H1 (cell line): ENCODE measurements at regions of chr13 and their contacts with region 1.

Region 1: GRCh38 chr13:113374511-113375175 is 10.7 kb upstream of the GRTP1 start:
- DNase-seq: no peak
- H3K4me3 ChIP-seq: no peak overlapping the region
- H3K27ac ChIP-seq: no peak overlapping the region
- H3K4me1 ChIP-seq: peaks cover 3 to 18% (median 10%) of the 10 kb centered on the region in 4 experiments
- H3K27me3 ChIP-seq: no peaks in the 10 kb centered on the region
- CTCF ChIP-seq: no peak
- EP300 ChIP-seq: no peak
- POLR2A ChIP-seq: no peak
- RAD21 ChIP-seq: no peak

Region 2: DNA sequence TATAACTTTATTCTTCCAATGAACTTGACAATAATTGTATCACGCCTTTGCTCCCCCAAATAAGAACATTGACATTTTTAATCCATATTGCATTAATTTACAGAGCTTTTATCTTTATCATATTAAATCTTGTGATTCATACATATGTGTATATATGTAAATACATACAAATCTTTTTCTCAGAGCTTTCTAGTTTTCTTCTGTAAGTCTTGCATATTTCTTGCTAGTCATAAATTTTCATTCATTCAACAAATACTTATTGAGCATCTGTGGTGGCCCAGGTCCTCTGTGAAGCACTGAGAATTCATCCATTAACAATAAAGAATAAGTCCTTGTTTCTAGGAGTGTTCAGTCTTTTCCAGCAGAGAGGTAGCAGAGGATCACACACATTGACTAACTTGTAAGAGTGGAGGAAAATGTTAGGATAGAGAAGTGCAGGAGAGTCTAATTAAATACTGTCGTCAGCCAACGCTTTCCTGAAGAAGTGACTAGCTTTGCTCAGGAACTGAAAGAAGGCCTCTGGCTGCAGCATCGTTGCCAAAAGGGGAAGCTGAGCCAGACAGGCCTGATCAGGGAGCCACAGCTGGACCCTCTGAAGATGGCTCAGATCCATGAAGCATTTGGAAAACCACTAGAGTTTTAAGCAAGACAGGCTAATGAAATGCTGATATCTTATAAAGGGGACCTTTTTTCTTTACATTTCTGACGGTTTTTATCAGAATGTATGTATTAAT is 116.2 kb before region 1 on chr13:
- CTCF ChIA-PET with region 1: no interaction called
- POLR2A ChIA-PET with region 1: no interaction called
- DNase-seq: no peak
- H3K4me3 ChIP-seq: no peak overlapping the region
- H3K27ac ChIP-seq: no peak overlapping the region
- H3K4me1 ChIP-seq: no peaks in the 10 kb centered on the region
- H3K27me3 ChIP-seq: no peaks in the 10 kb centered on the region
- CTCF ChIP-seq: no peak
- EP300 ChIP-seq: no peak
- POLR2A ChIP-seq: no peak
- RAD21 ChIP-seq: no peak

Region 3: DNA sequence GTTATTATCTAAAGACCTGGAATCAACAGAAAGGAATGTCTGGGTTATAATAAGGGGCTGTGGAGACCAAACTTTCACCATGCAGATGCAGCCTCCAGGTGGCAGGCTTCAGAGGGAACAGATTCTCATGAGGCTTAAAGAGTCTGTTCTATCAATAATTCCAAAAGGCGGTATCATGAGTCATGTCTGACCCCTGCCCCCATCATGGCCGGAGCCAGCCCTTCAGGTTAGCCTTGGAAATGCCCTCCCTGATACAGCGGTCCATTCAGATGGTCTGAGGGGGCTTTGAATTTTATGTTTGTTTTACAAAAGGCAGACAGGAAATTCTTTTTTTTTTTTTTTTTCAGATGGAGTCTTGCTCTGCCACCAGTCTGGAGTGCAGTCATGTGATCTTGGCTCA is 99.3 kb before region 1 on chr13:
- CTCF ChIA-PET with region 1: interaction called, 12 read pairs
- POLR2A ChIA-PET with region 1: no interaction called
- DNase-seq: peak in 1 of 2 experiments; percentile 59
- H3K4me3 ChIP-seq: no peak overlapping the region
- H3K27ac ChIP-seq: no peak overlapping the region
- H3K4me1 ChIP-seq: no peaks in the 10 kb centered on the region
- H3K27me3 ChIP-seq: no peaks in the 10 kb centered on the region
- CTCF ChIP-seq: peak; percentile 29 to 61 (median 57)
- EP300 ChIP-seq: no peak
- POLR2A ChIP-seq: no peak
- RAD21 ChIP-seq: peak; percentile 55 to 62

Region 4: DNA sequence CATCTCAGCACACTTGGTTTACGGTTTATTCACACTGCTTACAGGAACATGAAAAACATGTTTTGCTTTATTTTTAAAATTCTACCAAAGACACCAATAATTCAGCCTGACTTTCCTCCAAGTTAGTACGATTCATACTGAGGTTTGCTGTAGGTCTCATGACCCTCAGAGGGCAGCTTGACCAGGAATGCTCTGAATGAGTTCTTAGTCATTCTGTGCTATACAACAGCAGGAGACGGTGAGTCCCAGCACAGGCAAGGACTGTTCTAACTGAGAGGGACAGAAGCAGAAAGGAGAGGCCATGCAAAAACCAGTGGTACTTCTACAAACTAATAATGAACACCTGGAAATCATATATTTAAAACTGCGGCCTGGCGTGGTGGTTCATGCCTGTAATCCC is 17.1 kb before region 1 on chr13:
- CTCF ChIA-PET with region 1: interaction called, 11 read pairs
- POLR2A ChIA-PET with region 1: interaction called, 16 read pairs
- DNase-seq: no peak
- H3K4me3 ChIP-seq: no peak overlapping the region
- H3K27ac ChIP-seq: no peak overlapping the region
- H3K4me1 ChIP-seq: peaks cover 0 to 5% (median under 1%) of the 10 kb centered on the region in 4 experiments; a peak in 3 of 7 replicates
- H3K27me3 ChIP-seq: no peaks in the 10 kb centered on the region
- CTCF ChIP-seq: no peak
- EP300 ChIP-seq: no peak
- POLR2A ChIP-seq: no peak
- RAD21 ChIP-seq: no peak

Region 5: GRCh38 chr13:113364311-113364889 is 10.2 kb before region 1 on chr13:
- CTCF ChIA-PET with region 1: interaction called, 8 read pairs
- POLR2A ChIA-PET with region 1: interaction called, 16 read pairs
- DNase-seq: no peak
- H3K4me3 ChIP-seq: peak overlapping the region in 3 of 4 experiments; percentile 6 to 52 (median 10); a peak in 4 of 8 replicates
- H3K27ac ChIP-seq: no peak overlapping the region; the same call in 1 of the 2 replicates
- H3K4me1 ChIP-seq: peaks cover 2 to 25% (median 7%) of the 10 kb centered on the region in 4 experiments
- H3K27me3 ChIP-seq: 0 out of 7 replicates have a peak, but pooled peaks cover 0 to 4% (median 0%) of the 10 kb centered on the region in 4 experiments
- CTCF ChIP-seq: no peak
- EP300 ChIP-seq: no peak
- POLR2A ChIP-seq: no peak; a peak in 1 of 3 replicates
- RAD21 ChIP-seq: no peak